HEK293T (cell line): ENCODE measurements at regions of chr16 and their contacts with region 1.

Region 1: DNA sequence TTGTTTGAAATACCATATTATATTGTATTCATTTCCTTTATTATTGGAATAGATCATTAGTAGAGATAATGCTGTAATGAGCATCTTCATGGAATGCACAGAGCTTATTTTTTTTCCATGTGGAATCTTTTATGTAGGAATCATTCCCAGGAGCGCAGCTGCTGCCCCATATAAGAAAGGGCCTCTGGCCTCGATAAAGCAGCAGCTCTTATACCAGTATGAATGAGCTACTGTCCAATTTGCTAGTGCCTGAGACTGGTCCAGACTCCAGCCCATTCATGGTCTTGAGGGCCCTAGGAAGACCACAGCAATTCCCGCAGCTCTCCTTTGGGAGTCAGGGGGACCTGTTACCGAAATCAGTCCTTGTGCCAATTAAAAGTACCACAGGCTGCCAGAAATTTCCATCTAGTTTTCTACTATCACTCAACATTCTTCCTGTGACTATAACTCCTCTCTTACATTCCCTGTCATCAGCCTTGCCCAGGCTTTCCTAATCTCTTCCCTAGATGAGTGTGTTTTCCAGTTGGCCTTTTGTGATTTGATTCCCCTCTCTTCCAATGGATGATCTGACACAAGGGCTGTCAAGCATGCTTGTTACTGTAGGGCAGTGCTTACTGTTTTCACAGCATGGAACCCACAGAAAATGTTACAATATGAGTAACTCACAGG is 1.9 kb downstream of the ZNF843 start:
- DNase-seq: no peak

Region 2: DNA sequence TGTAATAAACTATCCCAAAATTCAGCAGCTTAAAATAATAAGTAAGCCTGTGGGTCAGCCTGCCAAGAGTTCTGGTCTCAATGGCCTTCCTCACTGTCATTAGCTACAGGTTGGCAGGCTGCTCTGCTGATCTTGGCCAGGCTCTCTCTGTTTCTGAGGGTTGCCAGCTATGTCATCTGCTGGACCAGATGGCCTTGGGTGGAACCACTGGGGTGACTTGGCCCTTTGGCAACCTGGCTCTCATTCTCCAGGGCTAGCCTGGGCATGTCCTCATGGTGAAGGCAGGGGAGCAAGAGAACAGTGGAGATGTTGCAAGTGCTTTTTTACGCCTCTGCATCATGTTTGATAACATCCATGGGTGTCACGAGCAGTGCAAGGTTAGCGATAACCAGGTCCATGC is 167.0 kb before region 1 on chr16:
- CTCF ChIA-PET with region 1: no interaction called
- POLR2A ChIA-PET with region 1: no interaction called
- DNase-seq: no peak

Region 3: GRCh38 chr16:31451681-31452351 is 11.2 kb after region 1 on chr16:
- CTCF ChIA-PET with region 1: interaction called, 10 read pairs
- POLR2A ChIA-PET with region 1: interaction called, 20 read pairs
- DNase-seq: peak; percentile 70